Activated CD4-positive, alpha-beta T cell treated with anti-CD3 and anti-CD28 coated beads, Interleukin-2, amount 10 ng/mL, durations not matched to agents 7 days and 5 days (primary cell): ENCODE measurements at regions of chr17 and their contacts with region 1.

Region 1: DNA sequence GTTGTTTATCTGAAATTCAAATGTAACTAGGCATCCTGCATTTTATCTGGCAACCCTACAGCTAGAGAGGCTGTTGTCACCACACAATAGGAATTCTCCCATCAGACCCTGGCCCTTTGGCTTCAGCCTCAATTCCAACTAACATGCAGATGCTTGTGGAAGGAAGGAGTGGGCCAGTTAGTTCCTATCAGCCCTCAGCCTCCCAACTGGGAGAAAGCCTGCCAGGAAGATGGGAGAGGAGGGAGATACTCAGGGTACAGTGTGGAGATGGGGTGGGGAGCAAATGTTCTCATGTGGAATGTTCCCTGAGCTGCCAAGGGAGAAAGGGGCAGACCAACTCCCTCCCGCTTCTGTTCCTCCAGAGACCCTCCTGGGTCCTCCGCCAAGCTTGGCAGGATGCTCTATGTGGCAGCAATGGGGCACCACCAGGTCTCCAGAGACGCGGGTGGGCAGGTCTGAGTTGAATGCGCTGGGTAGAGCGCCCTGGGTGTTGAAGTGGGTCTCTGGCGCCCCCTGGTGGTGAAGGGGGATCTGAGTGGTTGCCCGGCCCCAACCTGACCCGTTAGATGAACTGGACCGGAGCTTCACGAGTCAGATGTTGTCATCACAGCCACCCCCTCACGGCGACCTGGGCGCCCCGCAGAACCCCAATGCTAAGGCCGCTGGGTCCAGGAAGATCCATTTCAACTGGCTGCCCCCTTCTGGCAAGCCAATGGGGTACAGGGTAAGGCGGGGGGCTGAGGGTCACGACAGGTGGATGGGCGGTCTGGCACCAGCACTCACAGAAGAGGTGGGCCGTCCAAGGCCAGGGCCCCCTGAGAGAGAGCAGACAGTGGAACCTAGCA is 15.2 kb downstream of the GALK1 start:
- DNase-seq: peak; percentile 90
- H3K4me3 Mint-ChIP-seq: no peak overlapping the region
- H3K27ac Mint-ChIP-seq: peak overlapping the region; percentile 2
- H3K4me1 Mint-ChIP-seq: peaks cover 23% of the 10 kb centered on the region
- H3K27me3 Mint-ChIP-seq: peaks cover 2% of the 10 kb centered on the region

Region 2: GRCh38 chr17:75632863-75633485 is 116.8 kb before region 1 on chr17 and contains the start of gene SMIM5:
- CTCF ChIA-PET with region 1: interaction called, 82 read pairs
- POLR2A ChIA-PET with region 1: interaction called, 5 read pairs
- DNase-seq: peak; percentile 88
- H3K4me3 Mint-ChIP-seq: no peak within 1 kb of the TSS
- H3K27ac Mint-ChIP-seq: no peak within 1 kb of the TSS
- H3K4me1 Mint-ChIP-seq: peaks cover 3% of the 10 kb centered on the region
- H3K27me3 Mint-ChIP-seq: no peaks in the 10 kb centered on the region
- total RNA-seq, gene SMIM5: 0.10 to 0.12 TPM

Region 3: DNA sequence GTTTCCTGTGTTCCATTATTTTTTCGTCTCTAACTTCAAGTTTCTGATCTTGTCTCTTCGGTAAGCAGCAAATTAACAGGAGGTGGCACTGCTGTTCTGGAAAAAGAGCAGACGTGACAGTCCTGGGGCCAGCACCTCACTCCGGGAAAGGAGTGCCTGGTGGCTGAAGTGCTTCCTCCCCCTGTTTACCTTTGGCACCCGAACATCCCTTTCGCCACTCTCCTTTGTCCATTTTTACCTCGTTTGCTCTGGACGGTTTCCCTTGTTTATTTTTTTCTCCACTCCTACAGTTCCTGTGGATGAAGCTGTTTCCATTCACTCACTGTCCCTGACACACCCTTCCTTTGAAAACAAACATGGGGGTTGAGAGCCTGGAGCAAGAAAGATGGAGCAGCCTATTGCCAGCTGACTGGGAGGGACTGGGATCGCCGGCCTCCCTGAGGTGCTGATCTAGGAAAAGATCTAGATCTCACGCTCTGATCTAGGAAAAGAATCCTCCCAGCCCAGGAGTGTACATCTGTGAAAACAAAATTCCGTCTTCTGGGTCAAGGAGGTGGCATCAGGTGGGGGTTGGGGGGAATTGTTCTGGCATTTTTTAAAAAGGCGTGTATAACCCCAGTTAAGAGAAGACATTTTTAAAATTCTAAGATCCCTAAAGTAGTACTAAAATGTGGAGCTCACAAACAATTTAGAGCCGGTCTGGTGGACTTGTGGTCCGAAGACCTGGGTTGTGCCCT is 69.9 kb before region 1 on chr17:
- CTCF ChIA-PET with region 1: interaction called, 33 read pairs
- POLR2A ChIA-PET with region 1: no interaction called
- DNase-seq: no peak
- H3K4me3 Mint-ChIP-seq: no peak overlapping the region
- H3K27ac Mint-ChIP-seq: peak overlapping the region; percentile 51
- H3K4me1 Mint-ChIP-seq: peaks cover 11% of the 10 kb centered on the region
- H3K27me3 Mint-ChIP-seq: no peaks in the 10 kb centered on the region

Region 4: DNA sequence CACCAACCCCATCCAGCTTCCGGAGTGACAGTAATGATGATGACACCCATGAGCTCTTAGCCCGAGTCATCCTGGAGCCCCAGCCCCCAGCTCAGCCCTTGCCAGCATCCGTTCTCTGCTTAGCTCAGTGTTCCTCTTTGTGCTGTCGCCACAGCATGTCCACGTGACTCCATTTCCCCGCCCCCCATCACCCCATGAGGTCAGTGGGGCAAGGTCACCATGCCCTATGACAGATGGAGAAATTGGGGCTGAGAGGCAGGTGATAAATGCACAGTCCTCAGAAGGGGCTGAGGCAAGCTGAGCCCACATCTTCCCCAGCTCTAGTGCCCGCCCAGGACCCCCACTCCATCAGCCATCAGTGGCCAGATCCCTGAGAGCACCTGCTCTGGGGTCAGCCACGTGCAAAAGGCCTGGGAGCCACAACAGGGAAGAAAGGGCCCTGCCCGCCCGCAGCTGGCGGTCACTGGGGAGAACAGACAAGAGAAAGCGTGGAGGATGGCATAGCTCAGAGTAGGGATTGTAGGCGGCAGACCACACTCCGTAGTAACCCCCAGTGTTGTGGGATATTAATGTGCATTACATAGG is 11.5 kb before region 1 on chr17:
- CTCF ChIA-PET with region 1: interaction called, 50 read pairs
- POLR2A ChIA-PET with region 1: no interaction called
- DNase-seq: no peak
- H3K4me3 Mint-ChIP-seq: no peak overlapping the region
- H3K27ac Mint-ChIP-seq: peak overlapping the region; percentile 22
- H3K4me1 Mint-ChIP-seq: peaks cover 9% of the 10 kb centered on the region
- H3K27me3 Mint-ChIP-seq: no peaks in the 10 kb centered on the region

Region 5: DNA sequence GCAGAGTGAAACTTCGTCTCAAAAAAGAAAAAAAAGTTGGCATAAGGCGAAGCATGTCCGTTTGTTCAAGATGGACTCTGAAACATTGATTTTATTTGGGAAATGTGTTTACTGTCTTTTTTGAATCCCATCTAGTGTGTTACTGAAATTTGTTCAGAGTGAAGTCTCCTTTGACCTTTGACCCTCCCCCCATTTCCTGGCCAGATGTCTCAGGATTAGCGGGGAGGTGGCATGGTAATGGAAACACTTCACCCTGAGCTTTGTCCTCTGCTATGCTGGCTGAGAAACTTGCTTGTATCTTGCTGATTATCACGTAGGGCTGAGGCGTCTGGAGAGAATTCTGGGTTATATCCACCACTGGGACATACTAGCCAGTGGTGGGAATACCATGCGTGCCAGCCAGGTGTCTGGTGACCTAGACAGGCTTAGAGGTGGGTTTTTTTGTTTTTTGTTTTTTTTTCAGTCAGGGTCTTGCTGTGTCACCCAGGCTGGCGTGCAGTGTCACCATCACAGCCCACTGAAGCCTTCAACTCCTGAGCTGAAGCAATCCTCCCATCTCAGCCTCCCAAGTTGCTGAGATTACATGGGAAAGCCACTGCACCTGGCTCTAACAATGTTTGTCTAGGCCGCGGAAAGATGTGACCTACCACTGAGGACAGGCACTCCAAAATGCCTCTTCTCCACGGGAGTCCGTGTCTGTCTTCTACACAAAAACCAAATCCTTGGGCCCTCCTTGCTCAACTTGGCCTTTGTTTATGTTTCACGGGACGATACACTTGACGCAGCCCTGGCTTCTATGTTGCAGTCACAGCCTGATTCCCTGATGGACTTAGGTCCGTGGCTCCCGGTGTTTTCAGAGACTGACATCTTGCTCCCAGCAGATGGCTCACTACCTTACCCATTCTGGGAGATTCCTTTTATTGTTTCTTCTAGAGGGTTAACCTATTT is 21.8 kb after region 1 on chr17:
- CTCF ChIA-PET with region 1: interaction called, 15 read pairs
- POLR2A ChIA-PET with region 1: interaction called, 3 read pairs
- DNase-seq: no peak
- H3K4me3 Mint-ChIP-seq: no peak overlapping the region
- H3K27ac Mint-ChIP-seq: no peak overlapping the region
- H3K4me1 Mint-ChIP-seq: peaks cover 12% of the 10 kb centered on the region
- H3K27me3 Mint-ChIP-seq: no peaks in the 10 kb centered on the region